Calu3 (cell line): ENCODE measurements at regions of chr3 and their contacts with region 1.

Region 1: DNA sequence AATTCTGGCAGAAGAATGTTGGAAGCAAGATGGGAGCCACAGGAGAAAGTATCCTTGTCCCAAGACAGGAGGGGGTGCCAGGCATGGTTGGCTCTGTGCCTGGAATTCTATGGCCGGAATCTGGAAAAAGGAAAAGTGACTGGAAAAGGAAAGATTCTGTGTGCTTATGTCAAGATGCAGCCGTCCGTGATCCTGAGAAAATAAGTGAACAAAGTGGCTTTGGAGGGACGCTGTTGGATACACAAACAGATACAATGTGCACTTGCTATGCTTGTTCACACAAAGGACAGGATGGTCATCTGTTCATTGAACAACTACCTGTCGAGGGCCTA is 28.5 kb upstream of the MUC20 start:
- DNase-seq: no peak
- H3K4me3 Mint-ChIP-seq: no peak overlapping the region
- H3K27ac Mint-ChIP-seq: no peak overlapping the region
- H3K4me1 Mint-ChIP-seq: peaks cover 5% of the 10 kb centered on the region
- H3K27me3 Mint-ChIP-seq: no peaks in the 10 kb centered on the region
- CTCF ChIP-seq: no peak

Region 2: DNA sequence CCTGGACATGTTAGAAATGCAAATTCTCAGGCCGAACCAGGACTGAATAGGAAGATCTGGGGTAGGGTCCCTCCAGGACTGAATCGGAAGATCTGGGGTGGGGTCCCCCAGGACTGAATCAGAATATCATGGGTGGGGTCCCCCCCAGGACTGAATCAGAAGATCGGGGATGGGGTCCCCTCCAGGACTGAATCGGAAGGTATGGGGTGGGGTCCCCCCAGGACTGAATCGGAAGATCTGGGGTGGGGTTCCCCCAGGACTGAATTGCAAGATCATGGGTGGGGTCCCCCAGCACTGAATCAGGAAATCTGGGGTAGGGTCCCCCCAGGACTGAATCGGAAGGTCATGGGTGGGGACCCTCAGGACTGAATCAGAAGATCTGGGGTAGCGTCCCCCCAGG is 264.3 kb after region 1 on chr3:
- CTCF ChIA-PET with region 1: no interaction called
- intact Hi-C with region 1: loop called (anchors 5 kb)
- DNase-seq: no peak
- H3K4me3 Mint-ChIP-seq: no peak overlapping the region
- H3K27ac Mint-ChIP-seq: no peak overlapping the region
- H3K4me1 Mint-ChIP-seq: no peaks in the 10 kb centered on the region
- H3K27me3 Mint-ChIP-seq: no peaks in the 10 kb centered on the region
- CTCF ChIP-seq: no peak

Region 3: GRCh38 chr3:196399485-196399945 is 707.2 kb after region 1 on chr3:
- CTCF ChIA-PET with region 1: no interaction called
- intact Hi-C with region 1: no loop called
- DNase-seq: no peak
- H3K4me3 Mint-ChIP-seq: no peak overlapping the region
- H3K27ac Mint-ChIP-seq: no peak overlapping the region
- H3K4me1 Mint-ChIP-seq: no peaks in the 10 kb centered on the region
- H3K27me3 Mint-ChIP-seq: no peaks in the 10 kb centered on the region
- CTCF ChIP-seq: no peak